ENCODE measurements at regions of chr4 and their contacts with region 1.

Region 1: DNA sequence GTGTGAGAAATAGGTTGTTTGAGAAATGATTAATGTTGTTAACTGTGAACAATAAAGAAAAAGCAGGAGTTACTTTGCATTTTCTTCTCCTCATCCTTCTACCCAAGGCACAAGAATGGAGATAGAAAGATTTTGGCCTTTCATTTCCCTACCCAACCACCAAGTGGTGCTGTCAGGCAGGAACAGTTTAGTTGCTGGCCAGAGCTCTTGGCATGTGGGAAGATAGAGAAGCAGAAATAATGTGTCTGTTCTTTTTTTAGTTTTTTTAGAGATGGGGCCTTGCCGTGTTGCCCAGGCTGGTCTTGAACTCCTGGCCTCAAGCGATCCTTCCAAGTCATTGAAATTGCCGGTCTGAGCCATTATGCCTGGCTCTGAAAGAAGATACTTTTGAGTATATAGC is 12.8 kb downstream of the HOPX start:
- DNase-seq: no peak
- H3K4me3 ChIP-seq: no peak overlapping the region
- H3K27ac ChIP-seq: no peak overlapping the region
- H3K4me1 ChIP-seq: peaks cover 0 to 2% (median under 1%) of the 10 kb centered on the region in 4 experiments; a peak in 4 of 7 replicates
- H3K27me3 ChIP-seq: peaks cover 0 to 2% (median 0%) of the 10 kb centered on the region in 4 experiments; a peak in 3 of 7 replicates
- CTCF ChIP-seq: peak; percentile 37 to 88 (median 81)
- EP300 ChIP-seq: no peak
- POLR2A ChIP-seq: no peak
- RAD21 ChIP-seq: peak; percentile 93 to 95

Region 2: DNA sequence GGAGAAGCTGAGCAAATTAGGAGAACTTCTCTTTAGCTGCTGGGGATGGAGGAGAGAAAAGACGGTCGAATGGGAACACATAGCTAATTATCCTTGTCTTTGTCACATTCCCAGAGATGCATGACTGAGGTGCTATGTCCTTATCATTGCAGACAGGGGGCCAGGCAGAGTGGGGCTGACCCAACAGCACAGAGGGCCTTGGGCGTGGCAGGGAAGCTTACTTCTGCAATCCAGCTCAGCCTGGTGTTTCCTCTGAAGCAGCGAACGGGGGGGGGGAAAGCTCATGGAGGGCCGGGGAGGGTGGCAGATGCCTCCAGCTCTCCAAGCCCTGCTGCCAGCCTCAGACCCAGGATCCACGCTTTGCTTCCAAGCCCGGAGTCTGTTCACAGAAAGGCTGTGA is 63.6 kb after region 1 on chr4:
- CTCF ChIA-PET with region 1: interaction called, 10 read pairs
- POLR2A ChIA-PET with region 1: no interaction called
- DNase-seq: no peak
- H3K4me3 ChIP-seq: no peak overlapping the region
- H3K27ac ChIP-seq: no peak overlapping the region
- H3K4me1 ChIP-seq: no peaks in the 10 kb centered on the region
- H3K27me3 ChIP-seq: no peaks in the 10 kb centered on the region
- CTCF ChIP-seq: peak in 1 of 3 experiments; percentile 12; a peak in 1 of 4 replicates
- EP300 ChIP-seq: no peak
- POLR2A ChIP-seq: no peak
- RAD21 ChIP-seq: no peak

Region 3: DNA sequence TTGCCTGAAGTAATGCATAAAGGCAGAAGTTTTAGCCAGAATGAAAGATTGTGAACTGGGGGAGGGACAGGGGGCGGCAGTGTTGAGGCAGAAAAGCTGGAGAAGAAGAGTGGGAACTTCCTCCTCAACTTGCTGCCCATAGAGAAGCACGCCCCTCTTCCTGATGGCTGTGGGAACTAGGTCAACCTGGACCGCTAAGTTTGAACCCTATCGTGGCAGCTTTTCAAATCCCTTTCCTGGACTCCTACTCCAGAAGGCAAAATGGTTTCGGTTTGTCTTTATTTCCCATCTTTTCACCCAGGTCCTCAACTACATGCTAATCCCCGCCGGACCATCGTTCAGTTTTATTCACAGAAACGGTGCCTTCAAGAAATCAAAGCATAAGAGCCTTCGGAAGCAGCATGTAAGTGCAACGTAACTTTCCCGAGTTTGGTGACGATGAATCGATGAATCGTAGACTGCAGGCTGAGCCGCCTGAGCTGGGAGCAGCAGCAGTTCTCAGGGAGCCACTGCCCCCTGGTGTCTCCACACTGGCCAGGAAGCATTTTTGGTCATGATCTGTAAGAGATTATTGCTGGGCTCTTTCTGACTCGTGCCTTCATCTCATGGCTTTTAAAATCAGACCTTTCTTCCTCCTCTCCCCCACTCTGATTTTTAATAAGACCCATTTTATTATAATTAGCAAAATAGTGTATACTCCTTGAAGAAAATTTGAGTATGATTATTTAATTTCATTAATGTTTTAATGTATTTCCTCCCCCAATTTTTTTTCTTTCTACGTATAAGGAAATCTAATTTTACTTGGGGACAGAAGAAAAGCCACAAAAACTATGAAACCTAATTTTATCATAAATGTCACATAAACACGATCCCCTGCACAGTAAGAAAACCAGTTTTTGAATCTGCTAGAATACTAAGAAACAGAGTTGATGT is 131.8 kb after region 1 on chr4:
- CTCF ChIA-PET with region 1: interaction called, 40 read pairs
- POLR2A ChIA-PET with region 1: no interaction called
- DNase-seq: peak; percentile 57 to 80
- H3K4me3 ChIP-seq: peak overlapping the region; percentile 30 to 62 (median 42); a peak in 7 of 8 replicates
- H3K27ac ChIP-seq: no peak overlapping the region
- H3K4me1 ChIP-seq: peaks cover 0 to 6% (median 0%) of the 10 kb centered on the region in 4 experiments; a peak in 2 of 7 replicates
- H3K27me3 ChIP-seq: peaks cover 0 to 8% (median 5%) of the 10 kb centered on the region in 4 experiments; a peak in 5 of 7 replicates
- CTCF ChIP-seq: peak; percentile 91 to 96 (median 91)
- EP300 ChIP-seq: no peak
- POLR2A ChIP-seq: no peak
- RAD21 ChIP-seq: peak; percentile 99

Region 4: GRCh38 chr4:56828784-56829535 is 160.7 kb after region 1 on chr4:
- CTCF ChIA-PET with region 1: interaction called, 13 read pairs
- POLR2A ChIA-PET with region 1: no interaction called
- DNase-seq: no peak
- H3K4me3 ChIP-seq: no peak overlapping the region
- H3K27ac ChIP-seq: no peak overlapping the region
- H3K4me1 ChIP-seq: no peaks in the 10 kb centered on the region
- H3K27me3 ChIP-seq: no peaks in the 10 kb centered on the region
- CTCF ChIP-seq: no peak
- EP300 ChIP-seq: no peak
- POLR2A ChIP-seq: no peak
- RAD21 ChIP-seq: no peak

Measured in H1 (cell line).